Heart left ventricle (tissue), 16 donors: ENCODE measurements at regions of chr6 and their contacts with region 1.

Region 1: DNA sequence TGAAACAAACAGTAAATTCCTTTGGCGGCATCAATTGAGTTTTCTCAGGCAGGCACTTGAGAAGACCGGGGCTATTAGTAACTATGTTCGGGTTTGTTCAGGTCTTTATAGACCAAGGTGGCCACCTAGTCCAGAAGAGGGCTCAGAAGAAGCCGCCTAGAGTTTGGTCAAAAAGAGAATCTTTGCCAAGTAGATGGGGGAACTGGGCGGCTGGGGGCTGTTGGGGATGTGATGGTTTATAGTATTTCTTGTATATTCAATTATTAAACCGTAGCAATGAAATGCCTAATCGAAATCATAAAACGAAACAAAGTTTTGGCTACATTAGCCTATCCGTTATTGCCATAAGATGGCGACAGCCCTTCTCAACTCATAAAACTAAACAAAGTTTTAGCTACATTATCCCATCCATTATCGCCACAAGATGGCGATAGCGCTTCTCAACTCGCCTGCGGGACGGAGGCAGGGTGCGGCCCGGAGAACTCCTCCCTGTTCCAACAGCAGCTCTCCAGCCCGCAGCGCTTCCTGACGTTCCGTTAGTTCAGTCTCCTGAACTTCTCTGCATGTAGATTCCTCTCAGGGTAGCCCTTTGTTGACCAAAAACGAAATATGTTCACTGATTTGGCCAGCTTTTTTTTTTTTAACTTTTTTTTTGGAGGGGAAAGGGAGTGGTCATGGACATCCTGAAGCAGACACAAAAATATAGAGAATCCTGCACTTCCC is 120.5 kb upstream of the PRSS16 start:
- DNase-seq: peak; percentile 91 to 95 (median 92)
- ATAC-seq: peak; percentile 88 to 95 (median 91)
- H3K4me3 ChIP-seq: peak overlapping the region in 11 of 12 donors; percentile 5 to 54 (median 47)
- H3K27ac ChIP-seq: peak overlapping the region in 11 of 12 donors; percentile 5 to 80 (median 67)
- H3K4me1 ChIP-seq: peaks cover 0 to 17% (median 4%) of the 10 kb centered on the region in 12 donors
- H3K27me3 ChIP-seq: no peaks in the 10 kb centered on the region
- CTCF ChIP-seq: peak; percentile 77 to 96 (median 90)
- POLR2A ChIP-seq: peak in 1 of 2 donors; percentile 23

Region 2: DNA sequence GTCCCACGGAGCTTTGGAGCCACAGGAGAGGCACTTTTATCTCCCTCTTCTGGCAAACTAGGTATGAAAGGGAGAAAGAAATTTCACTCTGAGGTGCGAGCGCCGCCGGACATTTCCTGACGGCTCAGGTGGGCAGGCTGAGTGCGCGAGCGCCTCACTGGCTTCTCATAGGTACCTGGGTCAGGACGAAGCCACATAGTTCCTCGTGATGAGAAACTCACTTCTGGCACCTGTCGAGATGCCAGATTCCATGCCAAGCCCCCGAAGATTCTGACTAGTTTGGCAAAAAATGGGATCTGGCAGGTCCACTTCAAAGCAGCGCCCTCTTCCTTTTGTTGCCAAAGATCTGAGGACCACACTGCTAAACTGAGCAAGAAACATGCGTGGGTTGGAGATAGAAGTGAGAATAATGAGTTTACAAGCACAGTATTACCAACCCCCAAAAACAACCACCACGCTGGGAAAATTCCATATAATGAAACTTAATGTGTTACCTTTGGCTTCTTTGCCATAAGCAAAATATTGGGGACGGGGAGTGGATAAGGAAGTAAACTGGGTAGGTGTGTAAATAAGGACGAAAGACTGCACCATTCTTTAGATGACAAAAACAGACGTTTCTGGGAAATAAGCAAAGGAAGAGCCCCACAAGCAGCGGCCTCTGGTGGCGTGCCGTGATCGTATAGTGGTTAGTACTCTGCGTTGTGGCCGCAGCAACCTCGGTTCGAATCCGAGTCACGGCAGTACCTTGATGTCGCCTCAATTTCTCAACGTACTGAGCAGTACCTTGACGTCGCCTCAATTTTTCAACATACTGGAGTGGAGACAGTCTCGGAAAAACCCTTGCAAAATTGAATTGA is 30.7 kb after region 1 on chr6:
- intact Hi-C with region 1: loop called in 2 of 10 experiments (anchors 1 to 2 kb)
- DNase-seq: peak; percentile 54 to 80 (median 67)
- ATAC-seq: peak in 3 of 4 donors; percentile 68 to 77 (median 75)
- H3K4me3 ChIP-seq: peak overlapping the region in 11 of 12 donors; percentile 2 to 61 (median 46)
- H3K27ac ChIP-seq: no peak overlapping the region
- H3K4me1 ChIP-seq: peaks cover 0 to 29% (median 8%) of the 10 kb centered on the region in 12 donors
- H3K27me3 ChIP-seq: peaks cover 0 to 11% (median 0%) of the 10 kb centered on the region in 9 donors
- CTCF ChIP-seq: peak in 11 of 12 donors; percentile 20 to 73 (median 48)
- POLR2A ChIP-seq: no peak